Esophagus muscularis mucosa (tissue), 4 donors: ENCODE measurements at regions of chr14 and their contacts with region 1.

Region 1: DNA sequence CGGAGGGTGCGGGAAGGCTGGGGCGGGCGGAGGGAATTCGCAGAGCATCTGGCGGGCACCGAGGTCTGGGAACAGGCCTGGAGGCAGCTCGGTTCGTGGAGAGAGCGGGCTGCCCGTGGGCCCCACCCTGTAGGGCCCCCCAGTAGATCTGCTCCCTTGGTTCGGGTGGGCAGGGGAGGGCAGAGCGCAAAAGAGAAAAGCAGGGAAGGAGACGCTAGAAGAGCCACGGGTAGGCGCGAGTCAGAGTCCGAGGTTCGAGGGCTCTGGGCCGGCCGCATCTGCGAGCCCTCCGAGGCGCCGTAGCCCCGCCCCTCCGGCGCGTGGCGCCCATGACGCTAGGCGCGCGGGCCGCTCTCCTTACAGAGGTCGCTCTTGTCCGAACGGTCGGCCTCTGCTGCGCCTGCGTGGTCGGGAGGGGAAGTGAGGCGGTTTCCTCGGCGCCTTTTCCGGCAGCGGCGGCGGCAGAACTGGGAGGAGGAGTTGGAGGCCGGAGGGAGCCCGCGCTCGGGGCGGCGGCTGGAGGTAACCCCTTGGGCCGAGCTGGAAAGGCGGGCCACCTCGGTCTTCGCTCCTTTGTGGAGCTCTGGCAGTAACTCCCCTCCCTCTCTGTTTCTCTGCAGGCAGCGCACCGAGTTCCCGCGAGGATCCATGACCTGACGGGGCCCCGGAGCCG is at the start of gene ARF6:
- DNase-seq: peak; percentile 98
- H3K4me3 ChIP-seq: peak within 1 kb of the TSS; percentile 84 to 99 (median 95)
- H3K27ac ChIP-seq: peak within 1 kb of the TSS; percentile 99 to 100 (median 100)
- H3K4me1 ChIP-seq: peaks cover 38 to 47% (median 46%) of the 10 kb centered on the region in 4 donors
- H3K27me3 ChIP-seq: no peaks in the 10 kb centered on the region
- CTCF ChIP-seq: no peak
- EP300 ChIP-seq: peak; percentile 4
- POLR2A ChIP-seq: peak; percentile 88
- total RNA-seq, gene ARF6: 41.5 to 66.4 (median 51.7) TPM

Region 2: GRCh38 chr14:49971156-49972130 is 78.7 kb after region 1 on chr14:
- intact Hi-C with region 1: loop called (anchors 5 kb)
- DNase-seq: no peak
- H3K4me3 ChIP-seq: no peak overlapping the region
- H3K27ac ChIP-seq: peak overlapping the region; percentile 60 to 75 (median 62)
- H3K4me1 ChIP-seq: peaks cover 35 to 45% (median 45%) of the 10 kb centered on the region in 4 donors
- H3K27me3 ChIP-seq: no peaks in the 10 kb centered on the region
- CTCF ChIP-seq: no peak
- EP300 ChIP-seq: no peak
- POLR2A ChIP-seq: no peak

Region 3: DNA sequence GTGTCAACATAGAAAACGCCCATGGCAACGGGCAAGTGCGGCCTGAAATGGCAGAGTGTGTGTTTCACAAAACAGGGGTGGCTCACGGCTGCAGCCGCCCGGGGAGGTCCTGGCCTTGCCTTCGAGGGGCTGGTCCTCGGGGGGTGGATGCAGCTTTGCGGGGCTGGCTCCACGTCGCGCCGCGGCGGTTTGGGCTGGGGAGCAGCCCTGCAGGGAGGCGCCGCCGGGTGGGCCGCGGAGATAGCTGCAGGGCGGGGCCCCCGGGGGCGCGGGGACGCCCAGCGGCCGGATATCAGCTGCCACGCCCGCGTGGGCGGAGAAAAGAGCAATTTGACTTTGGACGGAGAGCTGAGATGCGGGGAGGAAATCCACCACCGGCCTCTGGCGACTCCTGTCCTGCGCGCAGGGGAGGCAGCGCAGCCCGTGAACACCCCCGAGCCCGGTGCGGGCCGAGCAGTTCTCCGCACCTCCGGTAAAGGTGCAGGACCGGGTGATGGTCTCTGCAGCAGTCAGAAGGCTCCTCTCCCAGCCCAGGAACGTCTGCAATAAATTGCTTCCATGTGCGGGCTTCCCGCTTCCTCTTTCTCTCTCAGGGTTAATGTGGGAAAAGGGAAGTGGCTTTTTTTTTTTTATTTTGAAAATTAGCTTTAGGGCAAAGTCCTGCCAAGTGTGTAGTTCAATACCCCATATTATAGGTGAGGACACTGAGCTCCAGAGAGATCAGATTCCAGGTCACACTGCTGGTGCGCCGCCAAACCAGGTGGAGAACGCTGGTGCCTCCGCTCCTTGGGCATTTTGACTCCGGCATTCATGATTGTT is 110.7 kb after region 1 on chr14:
- intact Hi-C with region 1: loop called (anchors 5 kb)
- DNase-seq: peak; percentile 95
- H3K4me3 ChIP-seq: peak overlapping the region; percentile 59 to 65 (median 60)
- H3K27ac ChIP-seq: peak overlapping the region; percentile 74 to 82 (median 80)
- H3K4me1 ChIP-seq: peaks cover 45 to 56% (median 50%) of the 10 kb centered on the region in 4 donors
- H3K27me3 ChIP-seq: no peaks in the 10 kb centered on the region
- CTCF ChIP-seq: peak in 1 of 3 experiments; percentile 26
- EP300 ChIP-seq: no peak
- POLR2A ChIP-seq: no peak

Region 4: DNA sequence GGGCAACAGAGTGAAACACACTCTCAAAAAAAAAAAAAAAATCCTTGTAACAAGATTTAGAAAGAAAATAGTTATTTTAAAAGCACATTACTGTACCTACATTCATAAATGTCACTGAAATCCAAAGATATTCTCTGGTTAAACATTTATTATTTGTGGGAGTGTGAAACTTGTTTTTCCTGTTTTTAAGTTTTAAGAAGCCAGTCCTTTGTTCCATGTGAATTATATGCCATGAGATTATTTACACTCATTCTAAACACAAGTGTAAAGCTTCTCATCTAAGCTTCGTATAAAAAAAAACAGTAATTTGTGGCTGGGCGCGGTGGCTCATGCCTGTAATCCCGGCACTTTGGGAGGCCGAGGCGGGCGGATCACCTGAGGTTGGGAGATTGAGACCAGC is 208.6 kb after region 1 on chr14:
- intact Hi-C with region 1: loop called (anchors 5 kb)
- DNase-seq: no peak
- H3K4me3 ChIP-seq: no peak overlapping the region
- H3K27ac ChIP-seq: no peak overlapping the region
- H3K4me1 ChIP-seq: no peaks in the 10 kb centered on the region
- H3K27me3 ChIP-seq: no peaks in the 10 kb centered on the region
- CTCF ChIP-seq: no peak
- EP300 ChIP-seq: no peak
- POLR2A ChIP-seq: no peak